ENCODE measurements at regions of chr11 and their contacts with region 1.

Region 1: GRCh38 chr11:68506908-68507307 is 46.4 kb downstream of the PPP6R3 start:
- DNase-seq: no peak
- ATAC-seq: peak; percentile 57
- H3K4me3 ChIP-seq: no peak overlapping the region
- H3K27ac ChIP-seq: no peak overlapping the region
- H3K4me1 ChIP-seq: peaks cover 7% of the 10 kb centered on the region
- H3K27me3 ChIP-seq: no peaks in the 10 kb centered on the region
- CTCF ChIP-seq: peak in 2 of 3 experiments; percentile 9 to 18; a peak in 1 of 6 replicates
- EP300 ChIP-seq: no peak
- POLR2A ChIP-seq: no peak
- RAD21 ChIP-seq: no peak

Region 2: DNA sequence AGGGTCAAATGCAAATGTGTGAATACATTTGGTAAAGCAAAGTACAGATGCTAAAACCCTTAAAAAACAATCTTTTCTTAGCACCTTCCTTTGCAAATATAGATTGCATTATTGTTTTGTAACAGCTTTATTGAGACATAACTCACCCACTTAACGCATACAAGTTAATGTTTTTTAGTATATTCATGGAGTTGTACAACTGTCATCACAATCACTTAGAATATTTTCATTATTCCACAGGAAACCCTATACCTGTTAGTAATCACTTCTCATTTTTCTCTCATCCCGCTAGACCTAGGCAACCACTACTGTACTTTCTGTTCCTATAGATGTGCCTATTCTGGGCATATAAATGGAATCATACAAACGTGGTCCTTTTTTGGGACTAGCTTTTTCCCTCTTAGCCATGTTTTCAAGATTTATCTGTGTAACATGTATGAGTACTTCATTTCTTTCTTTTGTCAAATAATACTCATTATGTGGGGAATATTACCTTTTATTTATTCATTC is 11.6 kb before region 1 on chr11:
- CTCF ChIA-PET with region 1: interaction called, 3 read pairs
- POLR2A ChIA-PET with region 1: interaction called, 6 read pairs
- RAD21 ChIA-PET with region 1: interaction called, 3 read pairs
- SMC1A ChIA-PET with region 1: interaction called, 22 read pairs
- in situ Hi-C with region 1: no loop called
- intact Hi-C with region 1: no loop called
- DNase-seq: no peak
- ATAC-seq: peak; percentile 9; the same call in 1 of the 3 replicates
- H3K4me3 ChIP-seq: no peak overlapping the region; the same call in 1 of the 2 replicates
- H3K27ac ChIP-seq: no peak overlapping the region; the same call in 1 of the 2 replicates
- H3K4me1 ChIP-seq: peaks cover 41% of the 10 kb centered on the region
- H3K27me3 ChIP-seq: no peaks in the 10 kb centered on the region
- CTCF ChIP-seq: no peak
- EP300 ChIP-seq: no peak
- POLR2A ChIP-seq: no peak
- RAD21 ChIP-seq: no peak

Region 3: DNA sequence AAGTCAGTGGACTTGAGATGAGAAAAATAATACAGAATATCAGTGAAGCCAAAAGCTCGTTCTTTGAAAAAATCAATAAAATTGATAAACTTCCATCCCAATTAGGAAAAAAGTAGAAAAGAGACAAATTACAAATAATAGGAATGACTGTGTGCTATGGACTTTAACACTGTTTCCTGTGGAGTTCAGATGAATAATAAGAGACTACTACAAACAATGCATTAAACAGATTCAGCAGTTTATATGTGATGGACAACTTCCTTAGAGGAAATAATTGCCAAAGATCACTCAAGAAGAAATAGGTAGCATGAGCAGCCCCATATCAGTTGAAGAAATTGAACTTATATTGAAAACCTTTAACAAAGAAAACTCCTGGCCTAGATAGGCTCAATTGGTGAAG is 53.3 kb after region 1 on chr11:
- CTCF ChIA-PET with region 1: no interaction called
- POLR2A ChIA-PET with region 1: no interaction called
- RAD21 ChIA-PET with region 1: no interaction called
- SMC1A ChIA-PET with region 1: no interaction called
- in situ Hi-C with region 1: no loop called
- intact Hi-C with region 1: no loop called
- DNase-seq: no peak
- ATAC-seq: no peak
- H3K4me3 ChIP-seq: no peak overlapping the region
- H3K27ac ChIP-seq: no peak overlapping the region
- H3K4me1 ChIP-seq: no peaks in the 10 kb centered on the region
- H3K27me3 ChIP-seq: no peaks in the 10 kb centered on the region
- CTCF ChIP-seq: no peak
- EP300 ChIP-seq: no peak
- POLR2A ChIP-seq: no peak
- RAD21 ChIP-seq: no peak

Measured in GM12878 (cell line).